Heart right ventricle (tissue), 16 donors: ENCODE measurements at regions of chr7 and their contacts with region 1.

Region 1: GRCh38 chr7:159049266-159050025 is 95.2 kb downstream of the VIPR2 start:
- DNase-seq: no peak
- ATAC-seq: no peak
- H3K4me3 ChIP-seq: no peak overlapping the region
- H3K27ac ChIP-seq: no peak overlapping the region
- H3K4me1 ChIP-seq: no peaks in the 10 kb centered on the region
- H3K27me3 ChIP-seq: no peaks in the 10 kb centered on the region
- CTCF ChIP-seq: no peak

Region 2: DNA sequence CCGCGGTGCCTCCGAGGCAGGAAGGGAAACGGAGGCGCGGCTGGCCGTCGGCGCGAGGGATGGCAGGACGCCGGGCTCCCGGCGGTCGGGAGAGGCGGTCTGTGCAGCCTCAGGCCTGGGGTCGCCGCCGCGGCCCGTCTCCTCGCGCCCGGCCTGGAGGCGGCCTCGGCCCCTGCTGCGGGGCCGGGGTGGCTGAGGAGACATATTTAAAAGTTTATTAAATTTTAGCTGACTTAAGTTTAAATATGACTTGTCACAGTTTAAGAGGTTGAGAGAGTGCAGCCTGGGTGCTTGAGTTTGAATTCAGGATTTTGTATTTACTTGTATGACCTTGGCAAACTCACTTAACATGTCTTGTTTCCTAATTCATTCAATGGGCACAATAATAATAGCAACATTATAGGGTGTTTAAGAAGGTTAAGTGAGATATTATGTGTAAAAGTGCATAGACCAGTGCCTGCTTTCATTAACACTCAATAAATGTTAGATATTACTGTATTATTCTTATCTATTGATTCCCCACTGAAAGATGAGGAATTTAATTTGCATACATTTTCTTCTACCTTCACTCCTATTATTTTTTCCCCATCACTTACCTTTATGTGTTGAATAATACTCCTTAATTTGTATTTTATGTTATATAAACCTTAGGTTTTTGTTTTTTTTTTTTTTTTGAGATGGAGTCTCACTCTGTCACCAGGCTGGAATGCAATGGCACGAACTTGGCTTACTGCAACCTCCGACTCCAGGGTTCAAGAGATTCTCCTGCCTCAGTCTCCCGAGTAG is 192.4 kb before region 1 on chr7:
- intact Hi-C with region 1: no loop called
- DNase-seq: no peak
- ATAC-seq: peak in 3 of 8 donors; percentile 2 to 40 (median 3)
- H3K4me3 ChIP-seq: peak overlapping the region; percentile 59 to 98 (median 86)
- H3K27ac ChIP-seq: peak overlapping the region; percentile 80 to 94 (median 90)
- H3K4me1 ChIP-seq: peaks cover 0 to 48% (median 32%) of the 10 kb centered on the region in 9 donors
- H3K27me3 ChIP-seq: no peaks in the 10 kb centered on the region
- CTCF ChIP-seq: no peak

Region 3: DNA sequence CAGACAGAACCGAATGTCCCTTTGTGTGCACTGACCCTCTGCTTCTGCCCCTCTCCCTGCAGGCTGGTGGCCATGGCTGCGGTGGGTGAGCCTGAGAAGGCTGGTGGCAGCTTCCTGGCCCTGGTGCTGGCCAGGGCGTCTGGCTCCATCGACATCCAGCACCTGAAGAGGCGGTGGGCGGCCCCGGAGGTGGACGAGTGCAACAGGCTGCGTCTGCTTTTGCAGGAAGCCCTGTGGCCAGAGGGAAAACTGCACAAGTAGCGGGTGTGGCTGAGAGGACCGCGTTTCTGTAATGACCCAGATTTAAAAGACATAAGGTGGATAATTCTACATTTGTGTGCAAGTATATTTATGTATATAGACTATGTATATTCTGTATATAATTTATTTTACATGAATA is 103.9 kb before region 1 on chr7:
- intact Hi-C with region 1: no loop called
- DNase-seq: no peak
- ATAC-seq: no peak
- H3K4me3 ChIP-seq: no peak overlapping the region
- H3K27ac ChIP-seq: no peak overlapping the region
- H3K4me1 ChIP-seq: no peaks in the 10 kb centered on the region
- H3K27me3 ChIP-seq: no peaks in the 10 kb centered on the region
- CTCF ChIP-seq: no peak

Region 4: GRCh38 chr7:159137906-159138305 is 88.5 kb after region 1 on chr7:
- intact Hi-C with region 1: loop called in 1 of 10 experiments (anchors 10 kb)
- DNase-seq: no peak
- ATAC-seq: no peak
- H3K4me3 ChIP-seq: no peak overlapping the region
- H3K27ac ChIP-seq: no peak overlapping the region
- H3K4me1 ChIP-seq: peaks cover 0 to 28% (median 5%) of the 10 kb centered on the region in 9 donors
- H3K27me3 ChIP-seq: peaks cover 0 to 18% (median 3%) of the 10 kb centered on the region in 7 donors
- CTCF ChIP-seq: no peak